Heart right ventricle (tissue), 16 donors: ENCODE measurements at regions of chr11 and their contacts with region 1.

Region 1: DNA sequence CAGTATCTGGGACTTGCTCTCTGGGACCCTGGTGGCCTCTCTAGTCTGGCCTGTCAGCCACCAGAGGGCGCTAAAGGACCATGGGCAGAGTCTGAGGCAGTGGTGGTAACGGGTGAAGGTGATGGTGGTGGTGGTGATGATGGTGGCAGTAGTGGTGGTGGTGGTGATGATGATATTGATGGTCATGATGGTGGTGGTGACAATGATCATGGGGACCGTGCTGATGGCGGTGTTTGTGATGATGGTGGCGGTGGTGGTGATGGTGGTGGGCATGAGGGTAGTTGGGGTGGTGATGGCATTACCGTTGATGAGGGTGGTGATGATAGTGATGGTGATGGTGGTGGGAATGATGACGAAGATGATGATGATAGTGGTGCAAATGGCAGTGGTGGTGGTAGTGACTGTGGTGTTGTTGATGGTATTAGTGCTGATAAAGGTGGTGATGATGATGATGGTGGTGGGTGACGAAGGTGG is 16.0 kb downstream of the TRPM5 start:
- DNase-seq: peak; percentile 78 to 79
- ATAC-seq: peak; percentile 74 to 90 (median 83)
- H3K4me3 ChIP-seq: no peak overlapping the region
- H3K27ac ChIP-seq: no peak overlapping the region
- H3K4me1 ChIP-seq: no peaks in the 10 kb centered on the region
- H3K27me3 ChIP-seq: peaks cover 0 to 5% (median 0%) of the 10 kb centered on the region in 7 donors
- CTCF ChIP-seq: peak; percentile 73 to 90 (median 86)

Region 2: GRCh38 chr11:2002807-2003206 is 425.6 kb before region 1 on chr11:
- intact Hi-C with region 1: no loop called
- DNase-seq: no peak
- ATAC-seq: peak in 6 of 8 donors; percentile 30 to 52 (median 40)
- H3K4me3 ChIP-seq: no peak overlapping the region
- H3K27ac ChIP-seq: no peak overlapping the region
- H3K4me1 ChIP-seq: no peaks in the 10 kb centered on the region
- H3K27me3 ChIP-seq: no peaks in the 10 kb centered on the region
- CTCF ChIP-seq: no peak

Region 3: GRCh38 chr11:2532704-2533586 is 104.6 kb after region 1 on chr11:
- intact Hi-C with region 1: loop called (anchors 1 to 2 kb)
- DNase-seq: peak; percentile 89 to 93
- ATAC-seq: peak; percentile 76 to 95 (median 88)
- H3K4me3 ChIP-seq: peak overlapping the region in 6 of 10 donors; percentile 23 to 48 (median 38)
- H3K27ac ChIP-seq: peak overlapping the region in 9 of 10 donors; percentile 1 to 69 (median 54)
- H3K4me1 ChIP-seq: peaks cover 13 to 28% (median 21%) of the 10 kb centered on the region in 9 donors
- H3K27me3 ChIP-seq: no peaks in the 10 kb centered on the region
- CTCF ChIP-seq: peak; percentile 99 to 100 (median 99)

Region 4: DNA sequence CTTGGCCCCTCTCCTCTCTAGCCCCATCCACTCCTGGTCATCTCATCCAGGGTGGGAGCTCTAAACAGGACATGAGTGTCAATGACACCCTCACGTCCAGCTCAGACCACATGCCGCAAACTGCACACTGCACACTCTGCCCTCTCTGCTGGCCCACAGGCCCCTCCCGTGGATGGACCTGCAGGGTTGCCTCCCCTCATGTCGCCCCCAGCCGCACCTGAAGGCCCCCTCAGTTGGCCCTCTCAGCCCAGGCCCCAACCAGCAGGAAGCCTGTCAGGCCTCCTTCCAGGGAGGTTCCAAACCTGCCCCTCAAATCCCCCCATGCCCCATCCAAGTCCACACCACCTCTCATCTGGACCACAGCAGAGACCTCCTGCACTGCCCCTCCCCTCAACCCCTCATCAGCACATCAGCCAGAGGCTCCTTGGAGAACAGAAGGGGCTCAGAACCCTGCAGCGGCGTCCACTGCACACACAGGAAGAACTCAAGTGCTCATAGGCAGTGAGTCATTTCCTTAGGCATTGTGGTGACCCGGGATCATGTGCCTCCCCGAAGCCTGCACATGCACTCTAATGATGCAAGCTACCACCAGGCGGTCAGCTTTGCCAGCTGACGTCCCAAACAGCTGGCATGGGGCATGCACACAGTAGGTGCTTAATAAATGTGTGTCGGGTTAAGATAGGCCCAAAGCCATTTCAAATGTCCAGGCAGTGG is 470.2 kb after region 1 on chr11:
- intact Hi-C with region 1: loop called in 3 of 10 experiments (anchors 5 kb)
- DNase-seq: peak; percentile 46 to 54
- ATAC-seq: peak; percentile 2 to 75 (median 49)
- H3K4me3 ChIP-seq: peak overlapping the region in 1 of 10 donors; percentile 27
- H3K27ac ChIP-seq: peak overlapping the region in 8 of 10 donors; percentile 30 to 80 (median 64)
- H3K4me1 ChIP-seq: peaks cover 9 to 51% (median 34%) of the 10 kb centered on the region in 9 donors
- H3K27me3 ChIP-seq: peaks cover 0 to 9% (median 0%) of the 10 kb centered on the region in 7 donors
- CTCF ChIP-seq: no peak